ENCODE measurements at regions of chr11 and their contacts with region 1.

Region 1: GRCh38 chr11:77820563-77821348 is at the starts of genes AAMDC and RSF1:
- DNase-seq: peak; percentile 98
- H3K4me3 Mint-ChIP-seq: peak within 1 kb of the TSS; percentile 98
- H3K27ac Mint-ChIP-seq: peak within 1 kb of the TSS; percentile 97
- H3K4me1 Mint-ChIP-seq: peaks cover 36% of the 10 kb centered on the region
- H3K27me3 Mint-ChIP-seq: no peaks in the 10 kb centered on the region
- total RNA-seq, gene AAMDC: 6.0 to 6.4 TPM
- total RNA-seq, gene RSF1: 50.3 to 54.2 TPM

Region 2: DNA sequence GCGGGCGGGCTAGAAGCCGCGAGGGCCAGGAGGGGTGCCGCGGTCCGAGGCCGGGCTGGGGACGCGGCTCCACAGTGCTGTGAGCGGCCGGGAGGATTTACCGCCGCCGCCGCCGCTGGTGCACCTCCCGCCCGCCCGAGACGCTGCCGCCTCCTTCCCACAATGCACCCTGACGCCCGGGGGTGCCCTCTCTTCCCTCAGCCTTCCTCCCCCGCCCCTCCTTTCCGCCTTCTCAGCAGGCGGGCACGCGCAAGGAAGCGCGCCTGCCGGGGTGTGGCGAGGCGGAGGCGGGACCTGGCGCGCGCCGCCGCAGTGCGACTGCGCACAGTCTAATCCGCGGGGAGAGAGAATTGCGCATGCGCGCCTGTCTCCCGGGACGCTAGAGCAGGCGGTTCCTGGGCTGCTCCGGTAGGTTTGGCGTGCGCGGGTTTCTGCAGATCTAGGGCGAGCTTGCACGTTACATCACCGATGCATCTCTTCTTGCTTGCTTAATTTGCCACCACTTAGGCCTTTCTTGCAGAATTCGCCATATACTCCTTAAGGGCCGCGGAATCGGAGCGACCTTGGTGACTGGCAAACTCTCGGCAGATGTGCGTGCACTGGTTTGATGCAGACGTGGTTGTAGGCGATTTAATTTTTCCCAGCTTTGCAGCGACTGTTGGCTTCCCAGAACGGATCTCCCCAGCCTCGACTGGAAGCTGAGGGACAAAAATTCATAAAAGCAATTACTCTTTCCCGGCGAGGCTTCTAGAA is 1439.6 kb before region 1 on chr11 and contains the starts of genes GVQW3 and THAP12:
- CTCF ChIA-PET with region 1: no interaction called
- intact Hi-C with region 1: loop called (anchors 2 kb)
- DNase-seq: peak; percentile 97
- H3K4me3 Mint-ChIP-seq: peak within 1 kb of the TSS; percentile 91
- H3K27ac Mint-ChIP-seq: peak within 1 kb of the TSS; percentile 91
- H3K4me1 Mint-ChIP-seq: peaks cover 58% of the 10 kb centered on the region
- H3K27me3 Mint-ChIP-seq: no peaks in the 10 kb centered on the region
- total RNA-seq, gene GVQW3: 1.7 to 2.1 TPM
- total RNA-seq, gene THAP12: 39.4 to 40.6 TPM

Region 3: DNA sequence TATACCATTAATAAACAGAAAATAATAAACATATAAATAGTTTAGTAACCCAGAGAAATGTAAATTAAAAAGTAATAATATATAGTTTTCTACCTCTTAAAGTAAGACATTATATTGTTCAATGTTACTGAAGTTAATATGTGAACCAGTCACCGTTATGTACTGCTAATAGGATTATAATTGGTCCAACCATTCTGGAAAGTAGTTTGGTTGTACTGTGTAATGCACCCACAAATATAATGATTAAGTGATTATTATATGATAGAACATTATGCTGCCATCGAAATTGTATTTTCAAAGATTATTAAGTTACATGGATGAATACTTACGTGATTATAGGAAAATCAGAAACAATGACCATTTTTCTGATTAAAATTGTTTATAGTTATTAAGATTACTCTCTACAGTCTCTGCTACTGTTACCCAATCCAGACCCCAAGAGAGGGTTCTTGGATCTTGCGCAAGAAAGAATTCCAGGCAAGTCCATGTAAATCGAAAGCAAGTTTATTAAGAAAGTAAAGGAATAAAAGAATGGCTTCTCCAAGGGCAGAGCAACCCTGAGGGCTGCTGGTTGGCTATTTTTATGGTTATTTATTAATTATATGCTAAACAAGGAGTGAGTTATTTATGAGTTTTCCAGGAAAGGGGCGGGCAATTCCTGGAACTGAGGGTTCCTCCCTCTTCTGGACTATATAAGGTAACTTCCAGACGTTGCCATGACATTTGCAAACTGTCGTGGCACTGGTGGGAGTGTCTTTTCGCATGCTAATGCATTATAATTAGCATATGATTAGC is 909.9 kb before region 1 on chr11:
- CTCF ChIA-PET with region 1: no interaction called
- intact Hi-C with region 1: no loop called
- DNase-seq: no peak
- H3K4me3 Mint-ChIP-seq: no peak overlapping the region
- H3K27ac Mint-ChIP-seq: no peak overlapping the region
- H3K4me1 Mint-ChIP-seq: no peaks in the 10 kb centered on the region
- H3K27me3 Mint-ChIP-seq: no peaks in the 10 kb centered on the region

Region 4: DNA sequence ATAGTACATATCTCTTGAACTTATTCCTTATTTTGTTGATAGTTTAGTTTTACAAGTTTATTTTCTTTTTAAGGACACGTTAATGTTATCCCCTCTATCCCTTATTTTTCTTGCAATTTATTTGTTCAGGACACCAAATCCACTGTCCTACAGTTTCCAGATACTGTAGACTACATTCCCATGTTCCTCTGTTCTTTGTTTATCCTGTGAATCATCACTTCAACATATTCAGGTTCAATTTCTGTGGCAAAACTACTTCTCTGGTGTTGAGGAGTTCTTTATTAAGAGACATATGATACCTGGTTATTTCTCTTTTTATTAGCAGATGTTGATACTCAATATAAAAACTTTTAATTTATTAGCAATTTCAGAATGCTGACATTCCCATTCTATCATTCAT is 110.4 kb before region 1 on chr11:
- CTCF ChIA-PET with region 1: interaction called, 4 read pairs
- intact Hi-C with region 1: loop called (anchors 5 kb)
- DNase-seq: no peak
- H3K4me3 Mint-ChIP-seq: no peak overlapping the region
- H3K27ac Mint-ChIP-seq: no peak overlapping the region
- H3K4me1 Mint-ChIP-seq: peaks cover 22% of the 10 kb centered on the region
- H3K27me3 Mint-ChIP-seq: no peaks in the 10 kb centered on the region

Region 5: DNA sequence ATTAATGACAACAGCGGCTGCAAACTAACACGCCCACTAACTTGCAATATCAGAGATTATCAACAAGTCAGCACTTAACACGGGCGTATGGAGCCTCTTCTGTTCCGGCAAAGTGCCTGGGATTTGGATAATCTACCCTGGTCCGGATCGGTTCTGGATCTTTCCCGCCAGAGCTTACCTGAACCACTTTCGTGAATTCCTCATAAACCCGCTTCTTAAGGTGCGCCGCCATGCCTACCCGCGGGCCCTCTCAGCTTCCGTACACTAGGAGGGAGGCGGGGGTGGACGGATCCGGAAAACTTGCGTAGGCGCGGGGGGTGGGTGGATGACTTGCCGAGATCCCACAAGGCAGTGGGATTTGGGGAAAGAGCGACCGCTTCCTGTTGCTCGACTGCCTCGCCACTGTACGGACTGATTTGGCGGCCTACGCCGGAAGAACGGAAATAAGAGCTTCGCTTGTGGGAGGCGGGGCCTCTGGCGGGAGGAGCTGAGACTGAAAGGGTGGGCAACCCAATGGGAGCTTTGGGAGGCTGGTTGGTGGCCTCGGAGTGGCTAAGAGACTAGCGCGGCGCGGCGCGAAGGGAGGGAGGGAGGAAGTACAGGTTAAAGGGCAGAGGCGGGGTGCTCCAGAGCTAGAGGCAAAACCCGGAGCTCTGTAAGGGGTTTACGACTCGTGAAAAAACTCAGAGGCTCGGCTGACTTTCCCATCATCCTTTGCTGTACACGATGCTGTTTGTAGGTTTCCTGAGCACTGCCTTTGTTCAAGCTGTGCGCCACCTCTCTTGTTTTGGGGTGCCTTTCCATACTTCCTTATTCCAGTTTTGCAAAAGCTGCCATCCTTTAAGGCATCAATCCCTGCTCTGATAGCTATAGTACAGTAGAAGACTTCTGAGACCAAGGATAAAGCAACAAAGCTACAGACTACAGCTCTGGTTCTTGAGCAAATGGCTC is 173.9 kb after region 1 on chr11 and contains the start of gene INTS4:
- CTCF ChIA-PET with region 1: interaction called, 7 read pairs
- intact Hi-C with region 1: loop called (anchors 1 kb)
- DNase-seq: peak; percentile 99
- H3K4me3 Mint-ChIP-seq: peak within 1 kb of the TSS; percentile 83
- H3K27ac Mint-ChIP-seq: peak within 1 kb of the TSS; percentile 91
- H3K4me1 Mint-ChIP-seq: peaks cover 17% of the 10 kb centered on the region
- H3K27me3 Mint-ChIP-seq: no peaks in the 10 kb centered on the region
- total RNA-seq, gene INTS4: 45.5 to 46.0 TPM

Region 6: GRCh38 chr11:78079232-78080083 is 258.7 kb after region 1 on chr11 and contains the start of gene NDUFC2:
- CTCF ChIA-PET with region 1: no interaction called
- intact Hi-C with region 1: loop called (anchors 1 kb)
- DNase-seq: peak; percentile 75
- H3K4me3 Mint-ChIP-seq: peak within 1 kb of the TSS; percentile 92
- H3K27ac Mint-ChIP-seq: peak within 1 kb of the TSS; percentile 86
- H3K4me1 Mint-ChIP-seq: peaks cover 45% of the 10 kb centered on the region
- H3K27me3 Mint-ChIP-seq: no peaks in the 10 kb centered on the region
- total RNA-seq, gene NDUFC2: 180 to 183 TPM

Region 7: DNA sequence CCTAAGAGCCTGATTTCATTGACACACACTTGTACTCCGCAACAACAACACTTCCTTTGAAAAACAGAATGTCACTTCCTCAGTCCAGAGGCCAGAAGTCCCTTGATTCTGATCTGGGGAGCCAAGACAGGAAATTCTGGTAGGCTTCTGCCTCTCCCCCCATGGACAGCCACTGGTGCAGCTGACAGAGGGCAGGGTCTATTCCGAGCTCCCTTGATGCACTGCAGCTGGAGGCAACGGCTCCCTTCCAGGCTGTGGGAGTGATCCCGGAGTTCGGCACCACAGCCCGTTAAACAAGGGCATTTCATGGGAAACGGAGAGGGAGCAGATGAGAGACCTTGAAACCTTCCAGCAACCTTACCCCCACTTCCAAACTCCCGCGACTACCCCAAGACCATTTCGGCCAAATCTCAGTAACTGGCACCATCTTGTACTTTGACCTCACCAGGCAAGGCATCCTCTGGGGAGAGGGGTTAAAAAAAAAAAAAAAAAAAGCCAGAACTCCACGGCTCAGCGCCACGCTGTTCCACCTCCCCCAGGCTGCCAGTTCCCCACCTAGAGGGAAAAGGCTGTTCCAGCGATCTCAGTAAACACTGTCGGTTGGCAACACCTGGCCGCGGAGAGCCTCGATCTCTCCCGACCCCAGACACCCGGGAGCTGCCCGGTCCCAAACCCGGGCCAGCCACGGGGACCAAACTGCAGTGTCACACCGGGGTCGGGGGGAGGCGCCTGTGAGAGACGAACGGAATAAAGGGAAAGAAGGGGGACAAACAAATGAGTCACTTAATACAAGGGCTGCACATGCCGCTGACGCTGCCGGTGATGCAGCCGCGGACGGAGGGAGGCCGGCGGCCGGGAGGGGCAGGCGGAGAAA is 595.8 kb after region 1 on chr11:
- CTCF ChIA-PET with region 1: no interaction called
- intact Hi-C with region 1: loop called (anchors 2 kb)
- DNase-seq: peak; percentile 88
- H3K4me3 Mint-ChIP-seq: peak overlapping the region; percentile 81
- H3K27ac Mint-ChIP-seq: peak overlapping the region; percentile 44
- H3K4me1 Mint-ChIP-seq: peaks cover 22% of the 10 kb centered on the region
- H3K27me3 Mint-ChIP-seq: peaks cover 33% of the 10 kb centered on the region

Measured in activated naive CD4-positive, alpha-beta T cell treated with anti-CD3 and anti-CD28 coated beads for 36 hours (primary cell).